Lower leg skin (tissue), 4 donors: ENCODE measurements at regions of chr7 and their contacts with region 1.

Region 1: GRCh38 chr7:47285860-47286522 is 295.9 kb downstream of the TNS3 start:
- DNase-seq: peak in 1 of 2 donors; percentile 81
- H3K4me3 ChIP-seq: no peak overlapping the region
- CTCF ChIP-seq: no peak
- POLR2A ChIP-seq: no peak

Region 2: GRCh38 chr7:47428092-47428767 is 142.2 kb after region 1 on chr7:
- intact Hi-C with region 1: loop called (anchors 10 kb)
- DNase-seq: no peak
- H3K4me3 ChIP-seq: no peak overlapping the region
- CTCF ChIP-seq: no peak
- POLR2A ChIP-seq: no peak

Region 3: DNA sequence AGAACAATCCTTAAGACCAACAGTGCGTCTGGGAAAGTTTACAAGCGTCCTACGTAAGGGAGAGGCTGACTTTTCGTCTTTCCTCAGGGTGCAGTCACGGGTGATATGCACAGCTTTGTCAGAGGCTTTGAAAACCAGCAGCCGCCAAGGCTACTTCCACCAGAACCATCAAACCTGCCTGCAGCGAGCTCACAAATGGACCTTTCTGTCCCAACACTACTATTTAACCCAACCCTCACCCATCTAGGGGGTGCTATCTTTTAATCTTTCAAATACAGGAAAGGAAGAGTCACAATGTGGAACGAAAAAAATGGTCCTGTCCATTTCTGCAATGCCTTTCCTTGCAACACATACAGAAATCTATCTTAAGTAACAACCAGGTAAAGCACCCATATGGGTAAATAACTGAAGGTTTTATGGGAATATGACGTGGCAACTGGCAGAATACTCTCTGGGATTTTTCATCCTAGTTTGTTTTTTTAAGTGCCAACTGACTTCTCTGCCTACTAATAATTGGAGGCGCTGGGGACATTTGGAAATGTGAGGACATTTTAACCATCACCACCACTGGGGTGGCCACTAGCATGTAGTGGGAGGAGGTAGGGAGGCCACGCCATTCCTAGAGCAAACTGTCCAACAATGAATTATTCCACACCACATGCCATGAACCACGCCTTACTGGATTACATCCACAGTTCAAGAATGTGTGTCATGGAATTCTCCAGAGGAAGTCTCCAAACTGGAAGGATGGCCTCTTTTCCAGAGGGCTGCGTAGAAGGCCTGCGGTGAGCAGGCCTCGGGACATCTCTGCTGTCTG is 271.4 kb after region 1 on chr7:
- intact Hi-C with region 1: no loop called
- DNase-seq: peak in 1 of 2 donors; percentile 58
- H3K4me3 ChIP-seq: no peak overlapping the region
- CTCF ChIP-seq: no peak
- POLR2A ChIP-seq: no peak